ENCODE measurements at regions of chr4 and their contacts with region 1.

Region 1: DNA sequence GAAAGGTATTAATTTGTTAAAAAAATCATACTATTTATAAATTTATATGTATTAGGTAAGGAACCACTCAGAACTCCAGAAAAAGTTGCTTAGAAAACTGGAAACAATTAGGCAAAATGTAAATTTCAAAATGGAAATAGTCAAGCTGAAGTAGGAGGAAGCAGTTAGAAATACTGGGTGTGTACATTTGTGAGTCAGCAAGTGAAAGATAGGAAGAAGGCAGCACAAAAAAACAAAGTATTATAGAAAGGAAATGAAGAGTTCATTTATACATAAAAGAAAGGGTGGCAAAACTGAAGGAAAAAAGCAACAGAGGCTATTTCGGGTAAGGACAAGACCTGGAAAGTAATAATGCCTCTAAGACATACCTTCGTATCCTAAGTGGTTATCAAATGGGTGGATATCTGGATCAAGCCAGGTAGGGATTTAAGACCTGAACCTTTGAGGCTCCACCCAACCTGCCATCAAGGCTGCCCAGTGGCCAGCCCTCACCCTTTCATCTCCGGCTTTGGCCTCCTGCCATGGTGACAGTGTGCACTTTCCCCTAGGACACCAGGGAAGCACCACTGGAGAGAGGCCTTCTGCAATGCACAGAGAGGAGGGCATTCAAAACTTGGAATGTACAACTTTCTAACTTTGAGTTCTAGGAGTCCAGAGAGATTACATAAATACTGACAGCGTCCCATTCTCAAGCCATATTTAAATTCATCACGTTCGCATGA is at the start of gene LRRC66:
- DNase-seq: no peak
- H3K4me3 ChIP-seq: no peak within 1 kb of the TSS
- H3K27ac ChIP-seq: no peak within 1 kb of the TSS
- H3K4me1 ChIP-seq: no peaks in the 10 kb centered on the region
- H3K27me3 ChIP-seq: no peaks in the 10 kb centered on the region
- CTCF ChIP-seq: no peak

Region 2: GRCh38 chr4:51894059-51894645 is 125.9 kb before region 1 on chr4:
- intact Hi-C with region 1: loop called (anchors 5 kb)
- DNase-seq: no peak
- H3K4me3 ChIP-seq: no peak overlapping the region
- H3K27ac ChIP-seq: no peak overlapping the region
- H3K4me1 ChIP-seq: peaks cover 0 to 31% (median 8%) of the 10 kb centered on the region in 4 donors
- H3K27me3 ChIP-seq: no peaks in the 10 kb centered on the region
- CTCF ChIP-seq: no peak

Measured in tibial artery (tissue), 4 donors.